PC-9 (cell line): ENCODE measurements at regions of chr13 and their contacts with region 1.

Region 1: GRCh38 chr13:46553886-46554858 is 1.2 kb downstream of the LRCH1 start:
- DNase-seq: peak; percentile 49 to 63
- H3K4me3 ChIP-seq: peak overlapping the region; percentile 89
- H3K27ac ChIP-seq: peak overlapping the region; percentile 30
- H3K4me1 ChIP-seq: peaks cover 23% of the 10 kb centered on the region
- H3K27me3 ChIP-seq: no peaks in the 10 kb centered on the region
- CTCF ChIP-seq: peak; percentile 33; the same call in 1 of the 2 replicates

Region 2: DNA sequence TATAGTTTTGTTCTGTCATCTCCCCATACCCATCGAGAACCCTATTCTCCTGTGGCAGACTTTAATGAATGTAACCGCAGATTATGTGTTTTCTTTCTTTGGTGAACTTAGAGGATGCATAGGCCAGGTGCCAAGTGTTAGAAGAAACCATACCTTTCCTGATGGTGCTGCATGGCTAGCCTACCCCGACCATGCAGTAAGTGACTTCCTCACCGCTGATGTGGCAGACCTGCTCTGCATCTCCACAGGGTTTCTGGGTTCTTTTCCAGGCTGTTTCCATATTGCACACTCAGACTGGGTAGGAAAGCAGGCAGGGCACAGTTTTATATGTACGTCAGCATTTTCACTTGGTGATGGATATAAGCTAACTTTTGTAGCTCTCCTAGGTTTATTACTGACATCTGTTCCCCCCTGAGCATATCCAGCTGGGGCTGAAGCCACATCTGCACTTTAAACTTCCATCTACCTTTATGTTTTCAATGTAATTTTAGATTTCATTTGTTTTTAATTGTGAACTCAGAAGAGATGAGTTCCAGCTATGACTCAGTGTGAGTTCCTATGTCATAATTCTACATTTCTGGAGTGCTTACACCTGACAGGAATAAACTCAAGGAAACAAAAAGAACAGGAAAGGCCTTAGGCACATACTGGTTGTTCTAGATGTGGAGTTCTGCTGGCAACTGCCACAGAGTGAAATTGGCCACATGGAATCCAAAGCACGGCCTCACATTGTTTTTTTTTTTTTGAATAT is 41.1 kb after region 1 on chr13:
- CTCF ChIA-PET with region 1: no interaction called
- POLR2A ChIA-PET with region 1: no interaction called
- intact Hi-C with region 1: loop called (anchors 2 kb)
- DNase-seq: peak; percentile 55 to 93
- H3K4me3 ChIP-seq: no peak overlapping the region
- H3K27ac ChIP-seq: peak overlapping the region; percentile 55
- H3K4me1 ChIP-seq: peaks cover 49% of the 10 kb centered on the region
- H3K27me3 ChIP-seq: no peaks in the 10 kb centered on the region
- CTCF ChIP-seq: no peak

Region 3: DNA sequence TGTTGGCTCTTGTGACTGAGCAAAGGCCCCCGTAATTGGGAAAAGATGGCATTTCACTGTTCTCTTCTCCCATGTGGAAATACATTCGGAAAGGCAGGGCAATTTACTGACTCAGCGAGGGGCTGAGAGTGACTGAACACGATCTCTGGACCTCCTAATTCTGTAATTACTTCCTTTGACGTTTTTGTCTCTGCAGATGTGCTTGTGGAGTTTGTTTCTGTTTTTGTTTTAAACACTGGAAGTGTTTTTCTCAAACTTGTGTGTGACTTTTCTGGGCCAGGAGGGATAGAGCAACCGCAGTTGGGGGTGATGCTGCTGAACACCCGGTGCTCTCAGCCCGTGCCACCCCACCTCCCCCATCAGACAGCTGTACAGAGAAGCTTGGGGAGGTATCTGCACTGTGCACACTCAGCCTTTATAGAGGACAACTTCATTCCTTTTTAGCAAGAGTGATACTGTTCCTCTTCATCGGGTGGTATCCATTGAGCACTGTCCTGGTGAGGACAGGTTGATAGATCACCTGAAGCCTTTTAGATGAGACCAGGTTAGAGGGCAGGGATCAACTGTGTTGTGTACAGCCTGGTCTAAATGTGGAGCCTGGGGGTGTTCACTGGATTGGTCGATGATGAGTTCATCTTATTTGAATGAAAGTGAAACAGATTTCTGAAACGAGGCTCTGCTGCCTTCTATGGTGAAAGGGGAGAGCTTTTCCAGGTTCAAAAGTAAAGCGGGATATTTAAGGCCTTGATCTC is 125.4 kb after region 1 on chr13:
- CTCF ChIA-PET with region 1: no interaction called
- POLR2A ChIA-PET with region 1: no interaction called
- intact Hi-C with region 1: loop called (anchors 10 kb)
- DNase-seq: no peak
- H3K4me3 ChIP-seq: no peak overlapping the region
- H3K27ac ChIP-seq: no peak overlapping the region
- H3K4me1 ChIP-seq: peaks cover 3% of the 10 kb centered on the region; the same call in 1 of the 2 replicates
- H3K27me3 ChIP-seq: no peaks in the 10 kb centered on the region
- CTCF ChIP-seq: no peak

Region 4: DNA sequence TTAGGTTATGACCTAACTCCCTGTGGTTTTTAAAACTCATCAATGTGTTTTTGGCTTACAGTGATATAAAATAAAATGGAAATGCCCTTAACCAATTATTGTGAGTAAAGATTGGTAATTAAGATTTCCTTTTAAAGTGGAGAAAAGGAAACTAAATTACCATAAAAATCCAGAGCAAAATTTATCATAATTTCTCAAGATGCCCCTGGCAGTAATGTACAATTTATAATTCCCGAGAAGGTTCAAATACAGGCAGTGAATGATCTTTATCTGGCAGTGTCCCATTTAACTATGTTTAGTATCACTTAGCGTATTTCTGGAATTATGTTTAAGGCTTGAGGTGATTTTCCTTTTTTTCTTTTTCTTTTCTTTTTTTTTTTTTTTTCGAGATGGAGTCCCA is 181.3 kb after region 1 on chr13:
- CTCF ChIA-PET with region 1: interaction called, 11 read pairs
- POLR2A ChIA-PET with region 1: no interaction called
- intact Hi-C with region 1: no loop called
- DNase-seq: no peak
- H3K4me3 ChIP-seq: no peak overlapping the region
- H3K27ac ChIP-seq: no peak overlapping the region
- H3K4me1 ChIP-seq: no peaks in the 10 kb centered on the region
- H3K27me3 ChIP-seq: no peaks in the 10 kb centered on the region
- CTCF ChIP-seq: no peak

Region 5: GRCh38 chr13:47168066-47168465 is 613.9 kb after region 1 on chr13:
- CTCF ChIA-PET with region 1: no interaction called
- POLR2A ChIA-PET with region 1: no interaction called
- intact Hi-C with region 1: no loop called
- DNase-seq: no peak
- H3K4me3 ChIP-seq: no peak overlapping the region
- H3K27ac ChIP-seq: no peak overlapping the region
- H3K4me1 ChIP-seq: no peaks in the 10 kb centered on the region
- H3K27me3 ChIP-seq: no peaks in the 10 kb centered on the region
- CTCF ChIP-seq: no peak